Activated naive CD4-positive, alpha-beta T cell treated with anti-CD3 and anti-CD28 coated beads for 36 hours (primary cell): ENCODE measurements at regions of chr1 and their contacts with region 1.

Region 1: DNA sequence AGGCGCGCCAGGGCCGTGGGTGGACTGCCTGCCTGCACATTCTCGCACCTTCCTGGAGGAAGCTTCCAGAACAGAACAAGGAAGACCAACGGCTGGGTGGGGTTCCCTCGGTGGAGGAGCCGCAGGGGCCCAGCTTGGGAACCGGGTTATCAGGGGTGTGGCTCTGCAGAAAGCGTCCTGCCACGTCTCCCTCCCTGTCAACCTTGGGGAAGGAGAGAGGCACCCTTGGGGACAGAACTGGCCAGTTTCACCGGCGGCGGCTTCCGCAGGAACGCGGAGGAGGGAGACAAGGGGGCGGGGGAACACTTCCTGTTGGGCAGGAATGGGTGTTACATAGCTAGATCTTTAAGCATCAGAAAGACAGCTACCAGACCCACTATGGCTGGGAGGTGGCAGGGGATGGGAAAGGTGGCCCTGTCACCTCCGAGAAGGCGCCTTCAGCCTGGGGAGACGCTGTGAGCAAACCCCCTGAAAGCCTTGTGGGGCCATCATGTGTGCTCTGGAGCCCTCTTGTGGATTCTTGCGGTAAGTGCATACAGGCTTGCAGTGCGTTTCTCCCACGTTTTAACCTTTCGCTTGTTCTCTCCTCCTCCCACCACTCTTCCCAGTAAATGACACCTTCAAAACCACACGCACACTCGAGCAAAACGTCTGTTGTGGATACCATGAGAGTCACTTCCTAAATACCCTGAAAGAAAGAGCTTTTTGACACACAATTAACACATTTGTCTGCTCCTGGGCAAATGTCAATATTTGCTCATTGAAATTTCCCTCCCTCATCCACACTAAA is 3.8 kb upstream of the PLEKHA6 start:
- DNase-seq: peak; percentile 84
- H3K4me3 Mint-ChIP-seq: peak overlapping the region; percentile 38
- H3K27ac Mint-ChIP-seq: peak overlapping the region; percentile 52
- H3K4me1 Mint-ChIP-seq: peaks cover 19% of the 10 kb centered on the region
- H3K27me3 Mint-ChIP-seq: peaks cover 5% of the 10 kb centered on the region

Region 2: GRCh38 chr1:203861379-203862184 is 501.9 kb before region 1 on chr1 and contains the start of gene SNRPE:
- CTCF ChIA-PET with region 1: no interaction called
- intact Hi-C with region 1: loop called (anchors 1 kb)
- DNase-seq: peak; percentile 98
- H3K4me3 Mint-ChIP-seq: peak within 1 kb of the TSS; percentile 100
- H3K27ac Mint-ChIP-seq: peak within 1 kb of the TSS; percentile 95
- H3K4me1 Mint-ChIP-seq: peaks cover 25% of the 10 kb centered on the region
- H3K27me3 Mint-ChIP-seq: no peaks in the 10 kb centered on the region
- total RNA-seq, gene SNRPE: 366 to 370 TPM

Region 3: DNA sequence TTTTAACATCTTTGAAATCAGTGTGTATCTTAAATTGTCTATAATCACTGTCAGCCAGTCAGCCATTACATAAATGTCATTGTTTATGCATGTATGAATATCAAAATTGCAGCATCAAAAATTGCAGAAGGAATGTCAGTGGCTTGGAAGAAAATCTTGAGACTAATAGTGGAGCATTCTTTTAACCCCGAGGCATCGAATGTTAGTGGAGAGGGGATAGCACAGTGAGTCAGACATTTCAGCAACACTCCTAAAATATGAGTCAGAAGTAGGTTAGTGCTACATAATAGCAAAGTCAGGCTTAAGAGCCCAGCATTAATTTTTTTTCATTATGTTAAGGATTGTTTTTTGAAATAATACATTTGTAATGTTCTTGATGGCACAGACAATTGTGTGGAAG is 456.6 kb before region 1 on chr1:
- CTCF ChIA-PET with region 1: no interaction called
- intact Hi-C with region 1: no loop called
- DNase-seq: no peak
- H3K4me3 Mint-ChIP-seq: no peak overlapping the region
- H3K27ac Mint-ChIP-seq: no peak overlapping the region
- H3K4me1 Mint-ChIP-seq: no peaks in the 10 kb centered on the region
- H3K27me3 Mint-ChIP-seq: no peaks in the 10 kb centered on the region

Region 4: GRCh38 chr1:204207136-204207616 is 156.4 kb before region 1 on chr1:
- CTCF ChIA-PET with region 1: interaction called, 31 read pairs
- intact Hi-C with region 1: loop called (anchors 1 kb)
- DNase-seq: peak; percentile 83
- H3K4me3 Mint-ChIP-seq: no peak overlapping the region
- H3K27ac Mint-ChIP-seq: no peak overlapping the region
- H3K4me1 Mint-ChIP-seq: peaks cover 11% of the 10 kb centered on the region
- H3K27me3 Mint-ChIP-seq: peaks cover 15% of the 10 kb centered on the region

Region 5: GRCh38 chr1:204257954-204258752 is 105.4 kb before region 1 on chr1:
- CTCF ChIA-PET with region 1: interaction called, 70 read pairs
- intact Hi-C with region 1: loop called (anchors 1 kb)
- DNase-seq: peak; percentile 62
- H3K4me3 Mint-ChIP-seq: no peak overlapping the region
- H3K27ac Mint-ChIP-seq: no peak overlapping the region
- H3K4me1 Mint-ChIP-seq: no peaks in the 10 kb centered on the region
- H3K27me3 Mint-ChIP-seq: no peaks in the 10 kb centered on the region

Region 6: DNA sequence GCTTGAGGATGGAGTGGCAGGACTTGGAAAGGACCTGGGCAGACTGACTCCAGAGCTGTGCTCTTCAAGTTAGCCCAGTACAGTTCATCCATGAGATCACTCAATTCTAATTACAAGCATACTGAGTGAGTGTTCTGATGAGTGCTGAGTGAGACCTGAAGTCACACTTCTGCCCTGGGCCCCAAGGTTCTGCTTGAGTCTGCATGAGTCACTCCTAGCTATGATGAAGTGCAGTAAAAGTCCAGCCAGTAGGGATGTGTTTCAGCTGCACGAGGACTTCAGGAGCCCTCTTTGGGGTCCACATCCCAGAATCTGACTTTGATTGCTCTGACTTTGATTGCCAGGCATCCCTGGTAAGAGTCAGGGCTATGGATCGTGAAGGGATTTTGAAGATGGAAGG is 39.6 kb before region 1 on chr1:
- CTCF ChIA-PET with region 1: interaction called, 20 read pairs
- intact Hi-C with region 1: loop called (anchors 1 kb)
- DNase-seq: peak; percentile 88
- H3K4me3 Mint-ChIP-seq: no peak overlapping the region
- H3K27ac Mint-ChIP-seq: peak overlapping the region; percentile 59
- H3K4me1 Mint-ChIP-seq: peaks cover 22% of the 10 kb centered on the region
- H3K27me3 Mint-ChIP-seq: no peaks in the 10 kb centered on the region

Region 7: DNA sequence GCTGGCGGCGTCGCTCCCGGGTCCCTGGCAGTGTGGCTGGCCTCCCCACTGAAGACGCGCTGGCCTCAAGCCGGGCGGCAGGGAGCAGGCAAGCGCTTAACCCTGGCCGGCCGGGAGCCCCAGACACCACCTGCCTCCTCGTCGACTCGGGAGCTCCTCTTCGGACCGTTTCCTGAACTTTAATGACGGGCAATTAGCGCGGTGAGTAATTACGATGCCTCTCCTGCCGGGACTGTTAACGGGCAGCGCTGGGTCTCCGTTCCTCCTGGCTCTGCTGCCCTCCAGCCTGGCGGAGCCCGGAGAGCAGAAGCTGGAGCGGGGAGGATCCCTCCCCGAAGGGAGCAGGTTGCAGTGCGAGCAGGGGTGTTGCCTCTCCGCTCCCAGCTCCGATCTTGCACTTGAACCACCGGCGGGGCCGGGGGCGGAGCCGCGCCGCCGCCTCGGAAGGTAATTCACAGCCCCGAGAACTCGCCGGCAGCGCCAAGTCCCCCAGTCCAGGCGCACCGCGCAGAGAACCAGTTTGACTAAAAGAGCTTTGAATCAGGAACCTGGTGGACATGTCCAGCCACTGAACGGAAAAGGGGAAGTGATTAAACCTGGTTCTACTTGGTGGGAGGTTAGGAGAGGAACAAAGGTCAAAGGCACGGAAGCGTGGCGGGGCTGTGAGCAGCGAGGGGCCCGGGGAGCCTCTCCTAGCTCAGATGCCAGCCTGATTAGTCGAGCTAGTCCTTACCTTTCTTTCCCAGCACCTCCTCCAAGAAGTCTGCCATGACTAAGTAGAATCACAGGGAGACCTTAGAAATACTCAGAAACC is 14.5 kb after region 1 on chr1:
- CTCF ChIA-PET with region 1: interaction called, 15 read pairs
- intact Hi-C with region 1: no loop called
- DNase-seq: peak; percentile 55
- H3K4me3 Mint-ChIP-seq: peak overlapping the region; percentile 77
- H3K27ac Mint-ChIP-seq: no peak overlapping the region
- H3K4me1 Mint-ChIP-seq: peaks cover 13% of the 10 kb centered on the region
- H3K27me3 Mint-ChIP-seq: peaks cover 12% of the 10 kb centered on the region

Region 8: GRCh38 chr1:204506961-204507387 is 143.4 kb after region 1 on chr1:
- CTCF ChIA-PET with region 1: interaction called, 3 read pairs
- intact Hi-C with region 1: loop called (anchors 2 kb)
- DNase-seq: peak; percentile 95
- H3K4me3 Mint-ChIP-seq: peak overlapping the region; percentile 88
- H3K27ac Mint-ChIP-seq: peak overlapping the region; percentile 99
- H3K4me1 Mint-ChIP-seq: peaks cover 20% of the 10 kb centered on the region
- H3K27me3 Mint-ChIP-seq: peaks cover 4% of the 10 kb centered on the region